ENCODE measurements at regions of chr20 and their contacts with region 1.

Region 1: DNA sequence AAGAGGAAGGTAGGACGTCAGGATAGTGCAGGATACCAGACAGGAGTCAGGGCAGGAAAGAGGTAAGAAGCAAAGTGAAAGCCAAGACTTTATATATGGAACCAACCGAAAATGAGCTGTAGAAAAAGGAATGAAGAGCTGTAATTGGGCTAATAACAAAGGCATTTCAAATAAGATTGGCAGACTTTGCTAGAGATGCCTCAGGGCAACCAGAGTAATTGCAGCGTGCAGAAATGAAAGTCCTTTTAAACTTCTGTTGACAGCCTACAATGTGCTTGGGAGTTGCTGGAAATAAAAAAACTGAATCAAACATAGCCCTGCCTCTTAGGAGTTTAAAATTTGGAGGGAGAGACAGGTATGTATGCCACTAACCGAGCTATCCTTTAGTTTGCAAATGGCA is 56.4 kb upstream of the NKX2-4 start:
- DNase-seq: peak; percentile 25
- ATAC-seq: peak; percentile 27
- H3K4me3 ChIP-seq: no peak overlapping the region
- H3K27ac ChIP-seq: no peak overlapping the region
- H3K4me1 ChIP-seq: peaks cover 4% of the 10 kb centered on the region; the same call in 1 of the 2 replicates
- H3K27me3 ChIP-seq: peaks cover 9% of the 10 kb centered on the region
- CTCF ChIP-seq: no peak

Region 2: GRCh38 chr20:21303061-21303871 is 150.4 kb before region 1 on chr20 and contains the start of gene XRN2:
- CTCF ChIA-PET with region 1: interaction called, 15 read pairs
- POLR2A ChIA-PET with region 1: no interaction called
- intact Hi-C with region 1: no loop called
- DNase-seq: peak; percentile 97
- ATAC-seq: peak; percentile 93
- H3K4me3 ChIP-seq: peak within 1 kb of the TSS; percentile 92
- H3K27ac ChIP-seq: peak within 1 kb of the TSS; percentile 74
- H3K4me1 ChIP-seq: peaks cover 16% of the 10 kb centered on the region
- H3K27me3 ChIP-seq: no peaks in the 10 kb centered on the region
- CTCF ChIP-seq: 0 out of 2 replicates have a peak, but pooled peaks have one; percentile 27
- total RNA-seq, gene XRN2: 71.5 and 76.8 TPM in 2 replicates

Region 3: GRCh38 chr20:21465799-21466198 is 12.1 kb after region 1 on chr20:
- CTCF ChIA-PET with region 1: no interaction called
- POLR2A ChIA-PET with region 1: no interaction called
- intact Hi-C with region 1: no loop called
- DNase-seq: no peak
- ATAC-seq: no peak
- H3K4me3 ChIP-seq: no peak overlapping the region
- H3K27ac ChIP-seq: no peak overlapping the region
- H3K4me1 ChIP-seq: no peaks in the 10 kb centered on the region
- H3K27me3 ChIP-seq: peaks cover 28% of the 10 kb centered on the region
- CTCF ChIP-seq: no peak